CD4-positive, alpha-beta memory T cell (primary cell): ENCODE measurements at regions of chr10 and their contacts with region 1.

Region 1: GRCh38 chr10:17023386-17024298 is 106.0 kb downstream of the CUBN start:
- DNase-seq: peak; percentile 87 to 96 (median 91)
- H3K4me3 ChIP-seq: peak overlapping the region in 1 of 2 donors; percentile 4
- H3K4me3 Mint-ChIP-seq: peak overlapping the region; percentile 6 to 74 (median 54)
- H3K27ac ChIP-seq: peak overlapping the region; percentile 88
- H3K27ac Mint-ChIP-seq: peak overlapping the region; percentile 92 to 100 (median 99)
- H3K4me1 ChIP-seq: peaks cover 63% of the 10 kb centered on the region
- H3K4me1 Mint-ChIP-seq: peaks cover 46 to 76% (median 57%) of the 10 kb centered on the region in 4 donors
- H3K27me3 ChIP-seq: no peaks in the 10 kb centered on the region
- H3K27me3 Mint-ChIP-seq: no peaks in the 10 kb centered on the region

Region 2: DNA sequence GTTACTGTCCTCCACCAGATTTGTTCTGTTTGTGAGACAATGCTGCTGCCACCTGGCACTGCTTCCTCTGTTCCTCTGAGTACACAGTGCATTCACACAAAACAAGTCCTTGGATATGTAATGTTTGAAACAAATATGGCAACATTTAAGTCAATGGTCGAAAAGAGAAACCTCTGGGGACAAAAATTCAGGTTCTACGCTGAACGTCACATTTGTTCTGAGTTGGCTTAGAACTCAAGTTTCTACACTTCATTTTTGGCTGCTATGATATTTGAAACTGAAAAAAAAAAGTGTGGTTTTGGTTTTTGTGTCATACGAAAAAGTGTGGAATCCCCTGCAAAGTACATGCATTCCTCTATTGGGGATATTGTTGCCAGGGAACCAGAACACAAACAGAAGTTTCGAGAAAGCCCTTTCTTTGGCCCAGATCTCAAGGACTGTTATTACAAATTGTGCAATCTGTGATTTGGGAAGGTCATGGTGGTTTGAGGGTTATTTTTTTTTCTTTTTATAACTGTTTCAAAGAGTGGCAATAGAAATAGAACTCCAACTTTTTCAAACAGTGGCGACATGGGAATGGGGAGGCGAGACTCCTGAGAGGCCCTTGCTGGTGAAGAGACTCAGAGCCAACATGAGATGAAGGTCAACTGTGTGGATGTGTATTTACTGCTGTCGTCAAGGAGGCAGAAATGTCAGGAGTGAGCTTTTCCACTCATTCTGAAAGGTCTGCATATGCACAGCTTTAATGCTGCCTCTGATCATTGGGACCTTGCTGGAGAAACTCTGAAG is 21.5 kb before region 1 on chr10:
- CTCF ChIA-PET with region 1: interaction called, 13 read pairs
- POLR2A ChIA-PET with region 1: interaction called, 10 read pairs
- intact Hi-C with region 1: loop called (anchors 1 kb)
- DNase-seq: peak; percentile 54 to 87 (median 66)
- H3K4me3 ChIP-seq: no peak overlapping the region
- H3K4me3 Mint-ChIP-seq: peak overlapping the region; percentile 7 to 79 (median 72)
- H3K27ac ChIP-seq: peak overlapping the region; percentile 82
- H3K27ac Mint-ChIP-seq: peak overlapping the region; percentile 95 to 99 (median 98)
- H3K4me1 ChIP-seq: peaks cover 38% of the 10 kb centered on the region
- H3K4me1 Mint-ChIP-seq: peaks cover 29 to 50% (median 38%) of the 10 kb centered on the region in 4 donors
- H3K27me3 ChIP-seq: no peaks in the 10 kb centered on the region
- H3K27me3 Mint-ChIP-seq: no peaks in the 10 kb centered on the region

Region 3: GRCh38 chr10:17075533-17076359 is 52.1 kb after region 1 on chr10:
- CTCF ChIA-PET with region 1: no interaction called
- POLR2A ChIA-PET with region 1: no interaction called
- intact Hi-C with region 1: no loop called
- DNase-seq: no peak
- H3K4me3 ChIP-seq: no peak overlapping the region
- H3K4me3 Mint-ChIP-seq: no peak overlapping the region
- H3K27ac ChIP-seq: no peak overlapping the region
- H3K27ac Mint-ChIP-seq: peak overlapping the region in 3 of 7 donors; percentile 17 to 53 (median 48)
- H3K4me1 ChIP-seq: no peaks in the 10 kb centered on the region
- H3K4me1 Mint-ChIP-seq: peaks cover 0 to 4% (median 2%) of the 10 kb centered on the region in 4 donors
- H3K27me3 ChIP-seq: no peaks in the 10 kb centered on the region
- H3K27me3 Mint-ChIP-seq: no peaks in the 10 kb centered on the region

Region 4: DNA sequence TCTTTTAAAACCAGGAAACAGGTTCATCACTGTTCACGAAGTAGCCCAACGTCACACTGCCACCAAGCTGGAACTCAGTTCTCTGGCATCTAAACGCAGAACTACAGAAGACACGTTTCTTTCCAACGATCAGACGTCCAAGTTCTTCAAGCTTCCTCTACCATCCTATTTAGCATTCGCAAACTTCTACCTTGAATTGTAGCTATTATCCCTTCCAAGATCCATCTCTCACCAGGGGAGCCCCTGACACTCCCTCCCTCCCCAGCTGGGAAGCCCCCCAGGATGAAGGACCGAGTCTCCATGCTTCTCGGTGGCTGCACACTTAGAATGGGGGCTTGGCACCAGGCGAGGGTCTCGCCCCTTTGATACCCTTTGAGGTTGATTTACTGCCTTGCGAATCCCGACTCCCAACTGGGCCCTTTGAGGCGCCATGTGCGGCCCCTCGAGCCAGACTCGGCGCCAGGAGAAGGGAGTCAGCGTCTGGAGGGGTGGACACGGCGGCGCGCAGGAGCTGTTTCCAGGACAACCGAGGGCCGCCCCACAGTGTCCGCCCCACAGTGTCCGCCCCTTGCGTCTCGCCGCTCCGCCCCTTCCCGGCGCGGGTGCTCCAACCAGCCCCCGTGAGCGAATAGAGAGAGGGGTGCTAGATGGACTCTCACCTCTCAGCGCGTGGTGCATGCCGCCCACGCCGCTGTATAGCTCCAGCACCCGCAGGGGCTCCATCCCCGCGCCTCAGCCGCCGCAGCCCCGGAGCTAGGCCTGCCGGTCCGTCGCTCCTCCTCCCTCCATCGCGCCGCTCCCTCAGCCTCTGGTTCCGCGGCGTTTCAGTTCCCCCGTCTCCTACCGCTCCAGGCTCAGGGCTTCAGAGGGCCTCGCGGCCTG is 177.5 kb after region 1 on chr10 and contains the start of gene TRDMT1:
- CTCF ChIA-PET with region 1: interaction called, 4 read pairs
- POLR2A ChIA-PET with region 1: interaction called, 10 read pairs
- intact Hi-C with region 1: loop called (anchors 1 kb)
- DNase-seq: peak; percentile 79 to 84 (median 80)
- H3K4me3 ChIP-seq: peak within 1 kb of the TSS; percentile 72 to 89
- H3K4me3 Mint-ChIP-seq: peak within 1 kb of the TSS; percentile 91 to 98 (median 95)
- H3K27ac ChIP-seq: peak within 1 kb of the TSS; percentile 95
- H3K27ac Mint-ChIP-seq: peak within 1 kb of the TSS; percentile 98 to 99 (median 99)
- H3K4me1 ChIP-seq: peaks cover 27% of the 10 kb centered on the region
- H3K4me1 Mint-ChIP-seq: peaks cover 22 to 56% (median 40%) of the 10 kb centered on the region in 4 donors
- H3K27me3 ChIP-seq: no peaks in the 10 kb centered on the region
- H3K27me3 Mint-ChIP-seq: no peaks in the 10 kb centered on the region
- total RNA-seq, gene TRDMT1: 20.2 to 21.3 TPM